ENCODE measurements at regions of chr5 and their contacts with region 1.

Region 1: GRCh38 chr5:39732166-39732565 is 307.4 kb upstream of the DAB2 start:
- DNase-seq: no peak
- ATAC-seq: no peak
- H3K4me3 ChIP-seq: no peak overlapping the region
- H3K27ac ChIP-seq: no peak overlapping the region
- H3K4me1 ChIP-seq: no peaks in the 10 kb centered on the region
- H3K27me3 ChIP-seq: no peaks in the 10 kb centered on the region
- CTCF ChIP-seq: no peak

Region 2: GRCh38 chr5:39801306-39801705 is 69.1 kb after region 1 on chr5:
- CTCF ChIA-PET with region 1: no interaction called
- POLR2A ChIA-PET with region 1: interaction called, 11 read pairs
- in situ Hi-C with region 1: no loop called
- intact Hi-C with region 1: no loop called
- DNase-seq: no peak
- ATAC-seq: no peak
- H3K4me3 ChIP-seq: no peak overlapping the region
- H3K27ac ChIP-seq: no peak overlapping the region
- H3K4me1 ChIP-seq: no peaks in the 10 kb centered on the region
- H3K27me3 ChIP-seq: no peaks in the 10 kb centered on the region
- CTCF ChIP-seq: no peak